Ascending aorta (tissue), 2 donors: ENCODE measurements at regions of chr17 and their contacts with region 1.

Region 1: DNA sequence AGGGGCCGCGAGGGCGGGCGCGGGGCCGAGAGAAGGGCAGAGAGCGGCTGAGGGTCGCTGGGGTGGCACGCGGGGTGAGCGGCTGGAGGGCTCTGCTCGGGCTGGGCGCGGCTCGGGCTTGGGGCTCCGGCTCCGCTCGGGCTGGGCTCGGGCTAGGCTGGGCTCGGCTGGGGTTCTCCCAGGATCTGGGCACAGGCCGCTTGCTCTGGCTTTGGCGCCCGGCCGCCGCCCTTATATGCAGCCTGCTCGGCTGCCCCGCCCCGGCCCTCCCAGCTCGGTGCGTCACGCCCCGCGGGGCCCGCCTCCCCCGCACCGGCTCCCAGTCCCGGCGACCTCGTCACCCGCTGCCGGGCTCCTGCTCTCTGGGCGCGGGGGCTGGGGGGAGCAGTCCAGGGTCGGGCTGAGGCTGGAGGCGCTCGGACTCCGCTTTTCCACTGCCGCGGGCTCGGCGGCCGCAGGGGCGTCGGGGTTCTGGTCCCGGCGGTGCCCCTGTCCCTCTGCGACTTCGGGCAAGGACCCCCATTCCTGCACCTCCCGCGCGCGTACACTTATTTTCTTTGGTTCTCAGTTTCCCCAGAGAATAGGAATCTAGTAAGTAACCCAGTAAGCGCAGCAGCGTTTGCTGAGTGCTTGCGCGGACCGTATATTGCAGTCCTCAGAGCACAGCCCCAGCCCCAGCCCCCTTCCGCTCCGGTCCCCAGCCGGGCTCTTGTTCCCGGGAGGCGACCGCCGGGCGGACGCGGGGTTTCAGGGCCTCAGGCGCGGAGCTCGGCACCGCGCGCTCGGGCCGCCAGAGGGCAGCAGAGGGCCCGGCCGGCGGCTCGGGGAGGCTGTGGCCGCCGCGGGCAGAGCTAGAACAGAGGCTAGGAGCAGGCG is at the start of gene RASD1:
- DNase-seq: peak; percentile 54 to 94
- H3K4me3 ChIP-seq: peak within 1 kb of the TSS; percentile 69 to 70
- H3K27ac ChIP-seq: peak within 1 kb of the TSS; percentile 65 to 78
- H3K4me1 ChIP-seq: peaks cover 6 to 9% of the 10 kb centered on the region in 2 donors
- H3K27me3 ChIP-seq: no peaks in the 10 kb centered on the region
- CTCF ChIP-seq: peak; percentile 78 to 94 (median 88)
- total RNA-seq, gene RASD1: 293 TPM

Region 2: GRCh38 chr17:17356149-17356930 is 140.1 kb before region 1 on chr17:
- intact Hi-C with region 1: loop called (anchors 5 kb)
- DNase-seq: peak in 1 of 2 donors; percentile 79
- H3K4me3 ChIP-seq: no peak overlapping the region
- H3K27ac ChIP-seq: no peak overlapping the region
- H3K4me1 ChIP-seq: no peaks in the 10 kb centered on the region
- H3K27me3 ChIP-seq: peaks cover 3% of the 10 kb centered on the region
- CTCF ChIP-seq: peak; percentile 96 to 99 (median 97)

Region 3: DNA sequence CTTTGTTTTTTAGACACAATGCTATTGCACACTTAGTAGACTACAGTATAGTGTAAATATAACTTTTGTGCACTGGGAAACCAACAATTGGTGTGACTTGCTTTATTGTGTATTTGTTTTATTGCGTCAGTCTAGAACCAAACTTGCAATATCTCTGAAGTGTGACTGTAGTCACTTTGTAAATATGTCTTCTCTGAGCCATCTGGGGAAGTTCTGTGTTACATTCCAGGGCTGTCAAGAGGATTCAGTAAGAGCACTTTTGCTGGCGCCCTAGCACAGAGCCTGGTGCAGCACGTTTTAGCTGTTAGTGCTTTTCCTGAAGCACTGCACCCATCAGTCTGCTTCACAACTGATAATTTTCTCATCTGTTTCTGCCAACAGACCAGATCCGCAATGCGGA is 120.1 kb before region 1 on chr17:
- intact Hi-C with region 1: no loop called
- DNase-seq: no peak
- H3K4me3 ChIP-seq: no peak overlapping the region
- H3K27ac ChIP-seq: no peak overlapping the region
- H3K4me1 ChIP-seq: no peaks in the 10 kb centered on the region
- H3K27me3 ChIP-seq: no peaks in the 10 kb centered on the region
- CTCF ChIP-seq: no peak

Region 4: GRCh38 chr17:17416007-17416399 is 80.4 kb before region 1 on chr17:
- intact Hi-C with region 1: no loop called
- DNase-seq: no peak
- H3K4me3 ChIP-seq: no peak overlapping the region
- H3K27ac ChIP-seq: no peak overlapping the region
- H3K4me1 ChIP-seq: no peaks in the 10 kb centered on the region
- H3K27me3 ChIP-seq: no peaks in the 10 kb centered on the region
- CTCF ChIP-seq: no peak

Region 5: DNA sequence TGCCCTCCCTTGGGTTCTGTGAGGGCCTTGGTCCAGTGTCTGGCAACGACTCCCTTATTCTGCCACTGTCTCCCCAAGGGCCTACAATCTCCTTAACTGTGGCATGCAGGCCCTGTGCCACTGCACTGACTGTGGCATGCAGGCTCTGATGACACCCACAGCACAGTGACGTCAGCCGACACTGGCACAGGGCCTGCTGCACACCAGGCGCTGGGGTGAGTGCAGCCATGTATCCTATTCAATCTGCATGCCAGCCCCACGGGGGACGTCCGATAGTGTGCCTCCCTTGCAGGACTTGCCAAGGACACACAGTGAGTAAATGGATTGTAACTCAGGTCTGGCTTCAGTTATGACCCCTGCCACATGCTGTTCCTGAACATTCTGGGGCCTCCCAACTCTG is 39.5 kb after region 1 on chr17:
- intact Hi-C with region 1: loop called (anchors 5 kb)
- DNase-seq: peak in 1 of 2 donors; percentile 88
- H3K4me3 ChIP-seq: no peak overlapping the region
- H3K27ac ChIP-seq: no peak overlapping the region
- H3K4me1 ChIP-seq: peaks cover 0 to 21% of the 10 kb centered on the region in 2 donors
- H3K27me3 ChIP-seq: no peaks in the 10 kb centered on the region
- CTCF ChIP-seq: no peak

Region 6: DNA sequence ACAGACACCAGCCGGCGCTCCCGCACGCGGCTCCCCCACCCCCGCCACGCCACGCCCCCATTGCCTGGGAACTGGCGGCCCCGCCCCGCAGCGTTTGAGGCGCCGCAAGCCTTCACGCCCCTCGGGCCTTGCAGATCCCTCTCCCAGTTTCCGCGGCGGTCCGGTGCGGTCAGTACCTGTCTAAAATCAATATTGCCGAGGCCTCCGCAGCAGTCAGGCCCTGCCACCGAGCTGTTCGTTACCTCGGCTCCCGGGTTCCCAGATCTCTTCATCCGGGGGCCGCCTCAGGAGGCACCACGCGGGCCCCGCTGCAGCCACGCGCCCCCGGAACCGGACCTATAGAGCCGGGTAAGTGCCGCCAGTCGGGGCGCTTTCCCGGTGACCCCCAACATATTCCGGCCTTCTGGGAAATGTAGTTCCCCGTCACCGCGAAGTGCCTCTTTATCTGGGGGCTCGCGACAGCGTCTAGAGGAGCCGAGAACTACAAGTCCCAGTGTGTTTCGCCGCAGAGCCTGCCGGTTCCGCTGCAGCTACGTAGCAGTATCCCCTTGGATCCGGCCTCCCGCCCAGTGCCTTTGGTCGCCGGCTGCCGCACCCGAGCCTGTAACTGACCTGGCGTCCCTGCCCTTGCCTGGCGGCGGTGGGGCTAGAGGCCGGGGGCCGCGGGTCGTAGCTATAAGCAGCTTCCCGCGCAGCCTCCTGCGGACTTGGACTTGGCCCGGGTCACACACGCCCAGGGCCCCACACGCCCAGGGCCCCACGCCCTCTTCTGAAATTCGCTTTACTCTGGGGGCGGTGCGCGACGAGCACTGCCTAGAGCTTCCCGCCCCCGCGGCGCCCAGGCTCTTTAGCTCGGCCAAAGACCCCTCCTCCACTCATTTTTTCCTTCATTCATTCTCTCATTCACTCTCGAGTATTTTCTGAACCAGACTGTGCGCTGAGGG is 95.2 kb after region 1 on chr17 and contains the start of gene PEMT:
- intact Hi-C with region 1: loop called (anchors 1 kb)
- DNase-seq: peak; percentile 92 to 99
- H3K4me3 ChIP-seq: peak within 1 kb of the TSS; percentile 79 to 80
- H3K27ac ChIP-seq: peak within 1 kb of the TSS; percentile 81 to 85
- H3K4me1 ChIP-seq: peaks cover 2 to 14% of the 10 kb centered on the region in 2 donors
- H3K27me3 ChIP-seq: no peaks in the 10 kb centered on the region
- CTCF ChIP-seq: no peak
- total RNA-seq, gene PEMT: 690 TPM

Region 7: DNA sequence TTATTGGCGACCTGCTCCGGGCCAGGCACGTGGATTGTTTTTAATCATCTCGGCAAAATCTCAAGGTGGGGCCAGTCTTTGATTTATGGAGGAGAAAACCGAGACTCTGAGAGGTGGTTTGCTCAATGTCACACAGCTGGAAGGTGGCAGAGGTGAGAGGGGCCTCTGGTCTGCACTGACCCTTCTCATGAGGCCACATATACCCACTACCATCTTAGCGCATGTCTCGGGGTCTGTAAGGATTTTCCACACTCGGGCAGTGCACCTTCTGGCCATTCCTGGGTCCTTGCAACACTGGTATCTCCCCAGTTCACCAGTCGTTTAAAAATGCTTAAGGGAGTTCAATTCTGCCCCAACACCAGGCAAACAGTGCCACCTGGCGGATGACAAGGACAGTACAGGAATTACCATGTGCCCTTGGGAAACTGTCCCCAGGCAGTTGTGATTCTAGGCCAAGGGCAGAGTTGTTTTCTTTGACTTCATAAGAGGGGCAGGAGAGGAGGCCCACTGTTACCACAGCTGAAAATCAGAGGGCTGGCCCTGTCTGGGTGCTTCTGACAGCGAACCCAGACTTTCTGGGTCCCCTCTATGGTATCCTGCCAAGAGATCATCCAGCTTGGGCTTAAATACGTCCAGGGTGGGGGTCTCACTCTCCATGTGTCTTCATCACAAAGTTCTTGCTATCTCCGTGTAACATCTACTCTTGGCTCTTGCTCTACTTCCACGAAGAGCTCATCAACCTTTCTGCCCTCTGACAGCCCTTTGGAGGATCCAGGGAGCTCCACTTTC is 145.4 kb after region 1 on chr17:
- intact Hi-C with region 1: loop called (anchors 2 kb)
- DNase-seq: peak in 1 of 2 donors; percentile 85
- H3K4me3 ChIP-seq: no peak overlapping the region
- H3K27ac ChIP-seq: no peak overlapping the region
- H3K4me1 ChIP-seq: no peaks in the 10 kb centered on the region
- H3K27me3 ChIP-seq: no peaks in the 10 kb centered on the region
- CTCF ChIP-seq: peak; percentile 75 to 93 (median 80)